ENCODE measurements at regions of chr11 and their contacts with region 1.

Region 1: DNA sequence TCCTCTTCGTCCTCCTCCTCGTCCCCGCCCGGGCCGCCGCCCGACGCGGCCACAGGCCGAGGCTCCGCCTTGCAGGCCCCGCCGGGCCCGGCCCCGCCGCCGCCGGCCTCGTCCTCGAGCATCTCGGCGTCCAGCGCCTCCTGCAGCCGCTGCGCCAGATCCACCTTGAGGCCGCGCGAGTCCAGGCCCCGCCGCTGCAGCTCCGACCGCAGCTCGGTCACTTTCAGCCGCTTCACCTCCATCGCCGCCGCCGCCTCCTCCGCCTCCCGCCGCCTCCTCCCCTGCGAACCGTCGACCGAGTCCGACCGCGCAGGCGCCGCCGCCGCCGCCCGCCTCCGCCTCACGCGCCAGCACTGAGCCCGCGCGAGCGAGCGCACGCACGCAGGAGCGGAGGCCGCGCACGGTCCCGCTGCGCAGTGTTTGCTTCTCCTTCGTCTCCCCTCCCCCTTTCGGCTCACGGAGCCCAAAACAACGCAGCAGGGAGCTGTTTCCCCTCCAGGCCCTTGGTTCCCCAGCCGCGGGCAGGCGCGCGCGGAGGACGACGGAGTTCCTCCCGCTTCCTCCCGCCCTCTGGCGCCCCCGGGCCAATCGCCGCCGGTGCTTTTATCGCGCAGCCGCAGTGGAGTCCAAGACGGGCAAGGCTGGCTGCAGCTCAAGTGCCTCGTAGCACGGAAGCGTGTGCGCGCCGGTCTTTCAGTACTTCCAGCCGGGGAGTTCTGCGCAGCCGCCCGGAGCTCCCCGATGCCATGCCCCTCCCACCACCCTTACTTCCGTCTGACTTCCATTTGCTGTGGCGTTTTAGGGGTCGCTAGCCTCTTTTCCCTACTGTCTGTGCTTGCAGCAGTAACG is at the start of gene HNRNPUL2:
- DNase-seq: peak; percentile 96 to 100 (median 98)
- ATAC-seq: peak; percentile 80
- H3K4me3 ChIP-seq: peak within 1 kb of the TSS; percentile 65
- H3K4me3 Mint-ChIP-seq: peak within 1 kb of the TSS; percentile 93
- H3K27ac ChIP-seq: peak within 1 kb of the TSS; percentile 93 to 97
- H3K27ac Mint-ChIP-seq: peak within 1 kb of the TSS; percentile 98
- H3K4me1 ChIP-seq: peaks cover 52% of the 10 kb centered on the region
- H3K4me1 Mint-ChIP-seq: peaks cover 73% of the 10 kb centered on the region
- H3K27me3 ChIP-seq: no peaks in the 10 kb centered on the region
- H3K27me3 Mint-ChIP-seq: no peaks in the 10 kb centered on the region
- CTCF ChIP-seq: no peak
- total RNA-seq, gene HNRNPUL2: 35.2 to 37.6 TPM

Region 2: DNA sequence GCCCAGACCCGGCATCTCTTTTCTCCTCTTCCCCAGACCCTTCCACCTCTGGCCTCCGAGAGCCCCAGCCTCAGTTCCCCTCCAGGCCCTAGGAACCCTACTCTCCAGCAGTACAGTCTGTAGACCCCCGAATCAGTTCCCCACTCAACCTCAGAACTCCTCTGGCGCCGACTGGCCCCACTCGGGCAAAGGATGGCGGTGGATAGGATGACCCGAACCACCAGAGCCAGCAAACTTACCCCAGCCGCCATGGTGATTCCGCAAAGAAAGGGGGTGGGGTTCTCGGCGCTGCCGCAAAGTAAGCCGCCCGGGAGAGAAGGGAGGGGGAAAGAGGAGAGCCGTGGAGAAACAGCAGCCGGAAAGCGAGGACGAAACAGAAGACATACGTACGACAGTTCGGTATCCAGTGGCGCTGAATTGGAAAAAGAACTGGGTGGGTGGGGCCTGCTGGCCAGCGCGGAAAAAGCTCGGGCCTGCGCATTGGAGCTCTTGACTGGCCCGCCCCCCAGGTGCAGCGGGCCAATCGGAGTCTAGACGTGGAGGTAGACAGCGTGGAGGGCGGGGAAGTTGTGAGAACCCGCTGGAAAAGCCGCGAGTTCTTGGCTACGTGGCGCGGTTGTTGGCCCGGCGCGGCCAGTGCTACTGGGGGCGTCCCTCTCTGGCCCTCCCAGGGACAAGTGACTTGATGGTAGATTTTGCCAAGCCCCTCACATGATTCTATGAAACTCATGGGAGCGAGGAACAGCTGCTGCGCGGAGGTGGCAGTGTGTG is 153.4 kb before region 1 on chr11 and contains the start of gene EEF1G:
- CTCF ChIA-PET with region 1: no interaction called
- POLR2A ChIA-PET with region 1: interaction called, 15 read pairs
- intact Hi-C with region 1: no loop called
- DNase-seq: peak; percentile 95 to 100 (median 97)
- ATAC-seq: peak; percentile 94
- H3K4me3 ChIP-seq: peak within 1 kb of the TSS; percentile 82
- H3K4me3 Mint-ChIP-seq: peak within 1 kb of the TSS; percentile 93
- H3K27ac ChIP-seq: peak within 1 kb of the TSS; percentile 76 to 83
- H3K27ac Mint-ChIP-seq: peak within 1 kb of the TSS; percentile 89
- H3K4me1 ChIP-seq: peaks cover 48% of the 10 kb centered on the region
- H3K4me1 Mint-ChIP-seq: peaks cover 55% of the 10 kb centered on the region
- H3K27me3 ChIP-seq: no peaks in the 10 kb centered on the region
- H3K27me3 Mint-ChIP-seq: no peaks in the 10 kb centered on the region
- CTCF ChIP-seq: no peak
- total RNA-seq, gene EEF1G: 2,181 to 2,269 TPM

Region 3: DNA sequence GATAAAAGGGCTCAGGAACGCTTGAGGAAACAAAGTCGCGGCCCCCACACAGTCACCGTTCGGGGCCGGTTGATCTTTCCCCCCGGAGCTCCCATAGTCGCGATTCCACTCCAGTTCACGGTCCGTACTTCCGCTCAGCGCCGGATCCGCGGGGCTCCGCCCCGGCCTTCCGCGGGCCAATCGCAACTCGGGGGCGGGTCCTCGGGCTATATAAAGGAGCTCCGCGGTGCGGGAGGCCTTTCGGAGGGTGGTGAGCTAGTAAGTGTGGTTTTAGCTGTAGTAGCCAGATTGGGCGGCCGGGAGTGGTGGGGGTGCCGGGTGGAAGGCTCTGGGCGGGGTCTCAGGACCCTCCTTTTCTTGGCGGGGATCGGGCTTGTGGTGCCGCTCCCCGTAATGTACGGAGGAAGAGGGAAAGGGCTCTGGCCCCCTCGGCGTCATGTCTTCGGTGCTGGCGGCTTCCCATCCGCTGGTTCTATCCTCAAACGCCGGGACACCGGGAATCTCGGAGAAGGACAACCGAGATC is 62.0 kb before region 1 on chr11 and contains the starts of genes C11orf98 and CSKMT:
- CTCF ChIA-PET with region 1: no interaction called
- POLR2A ChIA-PET with region 1: interaction called, 40 read pairs
- intact Hi-C with region 1: no loop called
- DNase-seq: peak; percentile 92 to 97 (median 94)
- ATAC-seq: peak; percentile 91
- H3K4me3 ChIP-seq: peak within 1 kb of the TSS; percentile 73
- H3K4me3 Mint-ChIP-seq: peak within 1 kb of the TSS; percentile 99
- H3K27ac ChIP-seq: peak within 1 kb of the TSS; percentile 80 to 88
- H3K27ac Mint-ChIP-seq: peak within 1 kb of the TSS; percentile 96
- H3K4me1 ChIP-seq: peaks cover 48% of the 10 kb centered on the region
- H3K4me1 Mint-ChIP-seq: peaks cover 36% of the 10 kb centered on the region
- H3K27me3 ChIP-seq: no peaks in the 10 kb centered on the region
- H3K27me3 Mint-ChIP-seq: no peaks in the 10 kb centered on the region
- CTCF ChIP-seq: no peak
- total RNA-seq, gene C11orf98: 14.3 to 18.5 TPM
- total RNA-seq, gene CSKMT: 17.8 to 18.8 TPM

Region 4: GRCh38 chr11:62747475-62748160 is 20.5 kb after region 1 on chr11:
- CTCF ChIA-PET with region 1: no interaction called
- POLR2A ChIA-PET with region 1: interaction called, 228 read pairs
- intact Hi-C with region 1: no loop called
- DNase-seq: no peak
- ATAC-seq: no peak
- H3K4me3 ChIP-seq: no peak overlapping the region
- H3K4me3 Mint-ChIP-seq: no peak overlapping the region
- H3K27ac ChIP-seq: no peak overlapping the region
- H3K27ac Mint-ChIP-seq: no peak overlapping the region
- H3K4me1 ChIP-seq: peaks cover 23% of the 10 kb centered on the region
- H3K4me1 Mint-ChIP-seq: peaks cover 19% of the 10 kb centered on the region
- H3K27me3 ChIP-seq: no peaks in the 10 kb centered on the region
- H3K27me3 Mint-ChIP-seq: no peaks in the 10 kb centered on the region
- CTCF ChIP-seq: no peak

Region 5: DNA sequence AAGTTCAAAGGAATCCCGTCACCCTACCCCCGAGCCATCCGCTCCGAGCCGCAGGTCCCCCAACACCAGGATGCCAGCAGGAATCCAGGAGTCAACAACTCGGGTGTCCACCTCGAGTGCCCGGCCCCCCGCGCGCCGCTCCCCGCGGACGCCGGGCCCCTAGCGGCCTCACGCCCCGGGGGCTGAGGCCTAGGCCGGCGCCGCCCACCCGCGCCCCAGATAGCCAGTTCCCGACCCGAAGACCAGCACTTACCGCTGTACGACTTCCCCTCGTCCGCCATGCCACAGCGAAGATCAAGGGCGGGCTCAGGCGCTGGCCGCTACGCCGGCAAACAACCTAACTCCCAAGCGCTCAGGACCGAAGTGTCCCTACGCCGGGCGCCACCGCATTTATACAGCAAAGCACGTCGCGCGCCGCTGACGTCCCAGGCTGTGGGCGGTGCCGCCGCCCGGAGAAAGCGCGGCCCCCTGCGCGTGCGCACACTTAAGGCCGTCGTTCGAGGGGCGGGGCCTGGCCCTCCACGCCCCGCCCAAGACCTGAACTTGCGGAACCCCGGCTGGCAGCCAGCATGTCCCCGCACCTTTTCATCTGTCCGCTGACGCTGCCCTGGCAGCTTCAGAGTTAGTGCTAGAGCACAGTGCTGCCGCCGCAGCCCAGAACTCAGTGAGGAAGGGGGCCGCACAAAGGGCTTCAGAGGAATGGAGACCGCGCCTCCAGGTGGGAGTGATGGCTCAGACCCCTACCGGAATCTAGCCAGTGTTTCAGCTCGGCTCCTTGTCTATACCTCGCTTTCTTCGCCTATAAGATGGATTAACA is 78.1 kb after region 1 on chr11 and contains the start of gene NXF1:
- CTCF ChIA-PET with region 1: no interaction called
- POLR2A ChIA-PET with region 1: interaction called, 13 read pairs
- intact Hi-C with region 1: loop called in 1 of 2 experiments (anchors 2 kb)
- DNase-seq: peak; percentile 88 to 98 (median 96)
- ATAC-seq: peak; percentile 82
- H3K4me3 ChIP-seq: peak within 1 kb of the TSS; percentile 70
- H3K4me3 Mint-ChIP-seq: peak within 1 kb of the TSS; percentile 98
- H3K27ac ChIP-seq: peak within 1 kb of the TSS; percentile 60 to 83
- H3K27ac Mint-ChIP-seq: peak within 1 kb of the TSS; percentile 97
- H3K4me1 ChIP-seq: peaks cover 36% of the 10 kb centered on the region
- H3K4me1 Mint-ChIP-seq: peaks cover 41% of the 10 kb centered on the region
- H3K27me3 ChIP-seq: no peaks in the 10 kb centered on the region
- H3K27me3 Mint-ChIP-seq: no peaks in the 10 kb centered on the region
- CTCF ChIP-seq: no peak
- total RNA-seq, gene NXF1: 343 to 358 TPM

Region 6: DNA sequence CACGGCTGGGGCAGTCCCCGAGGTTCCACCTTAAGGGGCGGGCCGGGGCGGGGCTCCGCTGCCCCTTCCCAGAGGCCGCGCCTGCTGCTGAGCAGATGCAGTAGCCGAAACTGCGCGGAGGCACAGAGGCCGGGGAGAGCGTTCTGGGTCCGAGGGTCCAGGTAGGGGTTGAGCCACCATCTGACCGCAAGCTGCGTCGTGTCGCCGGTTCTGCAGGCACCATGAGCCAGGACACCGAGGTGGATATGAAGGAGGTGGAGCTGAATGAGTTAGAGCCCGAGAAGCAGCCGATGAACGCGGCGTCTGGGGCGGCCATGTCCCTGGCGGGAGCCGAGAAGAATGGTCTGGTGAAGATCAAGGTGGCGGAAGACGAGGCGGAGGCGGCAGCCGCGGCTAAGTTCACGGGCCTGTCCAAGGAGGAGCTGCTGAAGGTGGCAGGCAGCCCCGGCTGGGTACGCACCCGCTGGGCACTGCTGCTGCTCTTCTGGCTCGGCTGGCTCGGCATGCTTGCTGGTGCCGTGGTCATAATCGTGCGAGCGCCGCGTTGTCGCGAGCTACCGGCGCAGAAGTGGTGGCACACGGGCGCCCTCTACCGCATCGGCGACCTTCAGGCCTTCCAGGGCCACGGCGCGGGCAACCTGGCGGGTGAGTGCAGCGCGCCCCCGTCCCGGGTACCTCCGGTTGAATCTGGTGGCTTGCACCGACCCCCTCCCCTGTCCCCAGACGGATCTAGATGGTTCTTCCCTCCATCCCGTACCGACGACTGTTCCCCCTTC is 153.9 kb after region 1 on chr11 and contains the start of gene SLC3A2:
- CTCF ChIA-PET with region 1: interaction called, 12 read pairs
- POLR2A ChIA-PET with region 1: interaction called, 33 read pairs
- intact Hi-C with region 1: no loop called
- DNase-seq: peak; percentile 61 to 94 (median 82)
- ATAC-seq: peak; percentile 74
- H3K4me3 ChIP-seq: peak within 1 kb of the TSS; percentile 99
- H3K4me3 Mint-ChIP-seq: peak within 1 kb of the TSS; percentile 93
- H3K27ac ChIP-seq: peak within 1 kb of the TSS; percentile 95 to 98
- H3K27ac Mint-ChIP-seq: peak within 1 kb of the TSS; percentile 100
- H3K4me1 ChIP-seq: peaks cover 47% of the 10 kb centered on the region
- H3K4me1 Mint-ChIP-seq: peaks cover 52% of the 10 kb centered on the region
- H3K27me3 ChIP-seq: no peaks in the 10 kb centered on the region
- H3K27me3 Mint-ChIP-seq: no peaks in the 10 kb centered on the region
- CTCF ChIP-seq: peak; percentile 86
- total RNA-seq, gene SLC3A2: 231 to 234 TPM

Measured in CD4-positive, alpha-beta T cell (primary cell).